ENCODE measurements at regions of chr1 and their contacts with region 1.

Region 1: GRCh38 chr1:206734499-206735142 is 36.0 kb upstream of the IL19 start:
- DNase-seq: peak; percentile 85
- H3K4me3 Mint-ChIP-seq: no peak overlapping the region
- H3K27ac Mint-ChIP-seq: peak overlapping the region; percentile 16
- H3K4me1 Mint-ChIP-seq: peaks cover 57% of the 10 kb centered on the region
- H3K27me3 Mint-ChIP-seq: no peaks in the 10 kb centered on the region

Region 2: GRCh38 chr1:206761159-206761768 is 26.6 kb after region 1 on chr1:
- CTCF ChIA-PET with region 1: interaction called, 123 read pairs
- POLR2A ChIA-PET with region 1: interaction called, 26 read pairs
- intact Hi-C with region 1: loop called (anchors 1 kb)
- DNase-seq: no peak
- H3K4me3 Mint-ChIP-seq: no peak overlapping the region
- H3K27ac Mint-ChIP-seq: no peak overlapping the region
- H3K4me1 Mint-ChIP-seq: peaks cover 30% of the 10 kb centered on the region
- H3K27me3 Mint-ChIP-seq: peaks cover 5% of the 10 kb centered on the region

Region 3: GRCh38 chr1:206784471-206784903 is 49.9 kb after region 1 on chr1:
- CTCF ChIA-PET with region 1: interaction called, 19 read pairs
- POLR2A ChIA-PET with region 1: interaction called, 10 read pairs
- intact Hi-C with region 1: loop called (anchors 1 kb)
- DNase-seq: peak; percentile 96
- H3K4me3 Mint-ChIP-seq: peak overlapping the region; percentile 38
- H3K27ac Mint-ChIP-seq: peak overlapping the region; percentile 82
- H3K4me1 Mint-ChIP-seq: peaks cover 59% of the 10 kb centered on the region
- H3K27me3 Mint-ChIP-seq: peaks cover 22% of the 10 kb centered on the region

Region 4: GRCh38 chr1:206803221-206803730 is 68.7 kb after region 1 on chr1:
- CTCF ChIA-PET with region 1: interaction called, 315 read pairs
- POLR2A ChIA-PET with region 1: interaction called, 30 read pairs
- intact Hi-C with region 1: loop called (anchors 1 kb)
- DNase-seq: peak; percentile 89
- H3K4me3 Mint-ChIP-seq: peak overlapping the region; percentile 35
- H3K27ac Mint-ChIP-seq: peak overlapping the region; percentile 66
- H3K4me1 Mint-ChIP-seq: peaks cover 79% of the 10 kb centered on the region
- H3K27me3 Mint-ChIP-seq: peaks cover 13% of the 10 kb centered on the region

Region 5: DNA sequence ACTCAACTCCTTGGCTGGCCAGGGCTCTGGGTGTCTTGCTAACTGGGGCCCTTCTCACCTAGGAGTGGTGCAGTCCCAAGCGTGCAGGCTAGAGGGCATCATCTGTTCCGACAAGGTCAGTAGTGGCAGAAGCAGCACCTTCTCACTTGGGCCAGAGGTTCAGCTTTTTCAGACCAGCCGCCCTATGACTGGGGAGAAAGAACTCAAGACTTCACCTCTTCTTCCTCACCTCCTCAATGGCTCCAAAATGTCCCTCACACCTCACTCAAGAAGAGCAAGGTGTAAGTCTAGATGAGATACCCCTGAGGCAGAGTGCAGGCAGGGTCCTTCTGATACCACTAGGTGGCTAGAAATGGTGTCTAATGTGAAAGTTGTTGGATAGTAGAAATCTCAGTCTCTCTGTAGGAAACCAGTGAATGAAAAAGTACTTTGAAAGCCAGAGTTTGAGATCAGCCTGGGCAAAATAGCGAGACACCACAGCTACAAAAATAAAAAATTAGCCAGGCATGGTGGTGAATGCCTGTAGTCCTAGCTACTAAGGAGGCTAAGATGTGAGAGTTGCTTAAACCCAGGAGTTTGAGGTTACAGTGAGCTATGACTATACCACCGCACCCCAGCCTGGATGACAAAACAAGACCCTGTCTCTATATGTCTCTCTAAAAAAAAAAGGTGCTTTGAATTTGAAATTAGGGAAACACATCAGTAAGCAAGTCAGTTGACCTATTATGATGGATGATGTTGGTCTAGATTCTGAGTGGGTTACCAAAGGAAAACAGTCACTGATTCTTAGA is 122.2 kb after region 1 on chr1:
- CTCF ChIA-PET with region 1: interaction called, 11 read pairs
- POLR2A ChIA-PET with region 1: no interaction called
- intact Hi-C with region 1: no loop called
- DNase-seq: peak; percentile 38
- H3K4me3 Mint-ChIP-seq: no peak overlapping the region
- H3K27ac Mint-ChIP-seq: peak overlapping the region; percentile 1
- H3K4me1 Mint-ChIP-seq: peaks cover 22% of the 10 kb centered on the region
- H3K27me3 Mint-ChIP-seq: no peaks in the 10 kb centered on the region

Region 6: DNA sequence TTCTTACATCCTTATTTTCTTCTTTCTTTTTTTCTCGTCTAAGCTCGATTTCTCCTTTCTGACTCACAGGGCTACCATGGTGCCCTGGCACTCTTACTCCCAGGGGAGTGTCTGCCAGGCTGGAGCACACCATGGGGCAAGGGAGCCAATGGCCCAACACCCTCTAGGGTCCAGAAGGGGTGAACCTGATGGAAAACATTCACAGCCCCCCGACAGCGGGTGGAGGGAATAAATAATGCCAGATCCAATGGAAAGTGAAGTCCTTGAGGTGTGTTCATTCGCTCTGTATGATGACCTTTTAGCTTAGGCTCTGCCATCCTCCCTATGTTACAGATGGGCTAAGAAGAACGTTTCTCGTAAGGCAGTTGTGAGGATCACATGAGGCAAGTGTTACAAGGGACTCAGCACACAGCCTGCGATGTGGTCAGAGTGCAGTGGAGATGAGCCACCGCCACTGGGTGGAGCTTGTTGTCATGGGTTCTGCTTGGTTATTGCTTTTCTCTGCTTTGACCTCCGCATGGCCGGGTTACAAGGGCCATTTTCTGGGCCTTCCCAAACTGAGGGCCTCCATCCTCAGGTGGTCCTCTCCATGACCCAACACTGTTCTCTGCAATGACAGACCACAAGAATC is 190.6 kb after region 1 on chr1:
- CTCF ChIA-PET with region 1: interaction called, 27 read pairs
- POLR2A ChIA-PET with region 1: no interaction called
- intact Hi-C with region 1: no loop called
- DNase-seq: peak; percentile 82
- H3K4me3 Mint-ChIP-seq: no peak overlapping the region
- H3K27ac Mint-ChIP-seq: no peak overlapping the region
- H3K4me1 Mint-ChIP-seq: peaks cover 33% of the 10 kb centered on the region
- H3K27me3 Mint-ChIP-seq: no peaks in the 10 kb centered on the region

Region 7: DNA sequence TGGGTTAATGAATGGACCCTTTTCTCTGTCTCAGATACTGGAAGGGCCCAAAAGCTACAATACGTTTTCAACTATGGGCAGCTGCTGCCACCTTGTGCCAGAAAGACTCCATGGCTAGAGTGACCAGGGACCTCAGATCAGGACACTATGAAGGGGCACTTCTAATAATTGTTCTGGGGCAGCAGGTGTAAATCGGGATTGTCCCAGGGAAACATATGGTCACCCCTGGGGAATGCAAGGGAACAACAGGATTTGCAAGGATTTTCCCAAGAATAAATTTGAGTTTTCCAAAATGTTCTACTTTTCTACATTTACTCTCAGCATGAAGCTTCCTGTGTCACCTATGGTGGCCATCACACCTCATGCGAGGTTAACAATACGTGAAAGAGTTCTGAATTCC is 247.6 kb after region 1 on chr1:
- CTCF ChIA-PET with region 1: interaction called, 17 read pairs
- POLR2A ChIA-PET with region 1: no interaction called
- intact Hi-C with region 1: loop called (anchors 5 kb)
- DNase-seq: peak; percentile 72
- H3K4me3 Mint-ChIP-seq: no peak overlapping the region
- H3K27ac Mint-ChIP-seq: no peak overlapping the region
- H3K4me1 Mint-ChIP-seq: no peaks in the 10 kb centered on the region
- H3K27me3 Mint-ChIP-seq: peaks cover 15% of the 10 kb centered on the region

Region 8: DNA sequence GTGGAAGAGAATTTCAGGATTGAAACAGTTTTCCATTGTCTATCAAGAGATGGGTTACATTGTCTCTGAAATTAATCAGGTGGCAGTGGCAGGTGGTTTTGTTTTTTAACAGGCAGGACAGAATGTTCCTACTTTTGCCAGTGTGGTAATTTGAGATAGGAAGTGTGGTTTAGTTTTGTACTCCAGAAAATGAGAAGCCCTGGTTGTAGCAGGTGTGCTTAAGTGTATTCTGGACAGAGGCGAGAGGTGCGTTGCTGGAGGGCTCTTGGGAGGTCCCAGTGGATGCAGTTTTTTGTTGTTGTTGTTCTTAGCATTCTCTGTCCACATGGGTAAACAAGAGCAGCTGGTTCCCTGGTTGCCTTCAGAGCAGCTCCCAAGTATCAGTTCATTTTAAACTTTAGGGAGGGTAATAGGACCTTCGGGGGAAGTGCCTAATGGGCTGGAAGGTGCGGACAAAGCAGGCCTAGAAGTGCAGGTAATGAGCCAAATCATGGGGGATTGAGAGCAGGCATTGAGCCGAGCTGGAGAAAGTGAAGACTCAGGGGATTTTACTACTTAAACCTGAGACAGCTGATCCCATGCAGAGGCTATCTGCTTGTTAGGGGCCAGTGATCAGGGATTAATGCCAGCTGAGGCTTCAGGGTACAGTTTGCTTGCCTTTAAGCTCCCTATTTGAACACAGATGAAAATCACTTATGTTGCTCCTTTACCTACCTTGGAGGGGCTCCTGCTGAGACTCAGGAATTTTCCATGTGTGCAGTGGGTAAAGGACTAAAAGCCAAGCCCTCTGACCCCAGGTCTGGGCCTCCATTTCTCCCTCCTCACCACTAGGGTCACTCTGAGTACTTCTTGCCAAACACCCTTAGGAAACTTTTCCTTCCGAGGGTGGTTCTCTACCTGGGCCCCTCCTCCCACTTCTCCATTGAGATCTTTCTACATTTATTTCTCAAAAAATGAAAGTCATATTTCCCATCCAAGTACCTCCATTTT is 324.6 kb after region 1 on chr1:
- CTCF ChIA-PET with region 1: no interaction called
- POLR2A ChIA-PET with region 1: no interaction called
- intact Hi-C with region 1: no loop called
- DNase-seq: no peak
- H3K4me3 Mint-ChIP-seq: no peak overlapping the region
- H3K27ac Mint-ChIP-seq: no peak overlapping the region
- H3K4me1 Mint-ChIP-seq: no peaks in the 10 kb centered on the region
- H3K27me3 Mint-ChIP-seq: no peaks in the 10 kb centered on the region

Measured in activated CD4-positive, alpha-beta memory T cell treated with anti-CD3 and anti-CD28 coated beads for 36 hours (primary cell).